ENCODE measurements at regions of chr20 and their contacts with region 1.

Region 1: GRCh38 chr20:63537525-63538203 is 488 bp upstream of the PTK6 start:
- DNase-seq: peak; percentile 90 to 96 (median 92)
- ATAC-seq: peak; percentile 83
- H3K4me3 ChIP-seq: no peak overlapping the region
- H3K27ac ChIP-seq: peak overlapping the region; percentile 62 to 89 (median 86)
- H3K4me1 ChIP-seq: peaks cover 35% of the 10 kb centered on the region
- H3K27me3 ChIP-seq: no peaks in the 10 kb centered on the region
- CTCF ChIP-seq: peak; percentile 84 to 99 (median 99)
- POLR2A ChIP-seq: peak; percentile 30 to 80 (median 69)

Region 2: GRCh38 chr20:63602321-63602720 is 64.7 kb after region 1 on chr20:
- intact Hi-C with region 1: no loop called
- DNase-seq: no peak
- ATAC-seq: no peak
- H3K4me3 ChIP-seq: no peak overlapping the region
- H3K27ac ChIP-seq: no peak overlapping the region
- H3K4me1 ChIP-seq: no peaks in the 10 kb centered on the region
- H3K27me3 ChIP-seq: no peaks in the 10 kb centered on the region
- CTCF ChIP-seq: no peak
- POLR2A ChIP-seq: no peak

Region 3: DNA sequence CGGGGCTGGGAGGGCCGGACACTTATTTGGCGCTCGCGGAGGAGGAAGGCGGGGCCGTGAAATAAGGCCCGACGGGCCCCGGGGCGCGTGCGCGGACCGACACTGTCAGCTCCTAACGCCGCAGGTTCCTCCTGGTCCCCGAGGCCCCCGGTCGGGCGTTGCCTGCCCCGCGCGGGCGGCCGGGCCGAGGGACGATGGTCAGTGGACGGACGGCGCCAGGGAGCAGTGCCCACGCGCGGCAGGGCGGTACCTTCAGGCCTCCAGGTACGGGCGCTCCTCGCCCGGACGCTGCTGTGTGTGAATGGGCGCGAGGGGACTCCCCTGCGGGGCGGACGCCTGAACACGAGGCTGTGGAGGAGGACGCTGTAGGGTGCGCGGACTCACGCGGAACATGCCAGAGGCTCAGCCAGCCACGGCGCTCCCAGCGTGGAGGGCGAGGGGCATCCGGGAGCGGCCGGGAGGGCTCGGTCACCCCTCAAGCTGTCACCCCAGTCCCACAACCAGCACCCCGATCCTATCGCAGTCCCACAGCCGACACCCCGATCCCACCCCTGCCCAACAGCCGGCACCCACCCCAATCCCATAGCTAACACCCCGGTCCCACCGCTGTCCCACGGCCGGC is 89.6 kb after region 1 on chr20:
- intact Hi-C with region 1: no loop called
- DNase-seq: peak; percentile 95 to 96 (median 96)
- ATAC-seq: peak; percentile 90
- H3K4me3 ChIP-seq: peak overlapping the region; percentile 78 to 97
- H3K27ac ChIP-seq: peak overlapping the region; percentile 81 to 95 (median 94)
- H3K4me1 ChIP-seq: peaks cover 27% of the 10 kb centered on the region
- H3K27me3 ChIP-seq: no peaks in the 10 kb centered on the region
- CTCF ChIP-seq: no peak
- POLR2A ChIP-seq: peak; percentile 51 to 78 (median 73)

Region 4: GRCh38 chr20:63698739-63699465 is 161.2 kb after region 1 on chr20:
- intact Hi-C with region 1: no loop called
- DNase-seq: peak; percentile 7 to 59 (median 36)
- ATAC-seq: peak; percentile 41
- H3K4me3 ChIP-seq: no peak overlapping the region
- H3K27ac ChIP-seq: peak overlapping the region in 2 of 4 donors; percentile 54 to 57
- H3K4me1 ChIP-seq: peaks cover 37% of the 10 kb centered on the region
- H3K27me3 ChIP-seq: no peaks in the 10 kb centered on the region
- CTCF ChIP-seq: no peak
- POLR2A ChIP-seq: no peak

Region 5: DNA sequence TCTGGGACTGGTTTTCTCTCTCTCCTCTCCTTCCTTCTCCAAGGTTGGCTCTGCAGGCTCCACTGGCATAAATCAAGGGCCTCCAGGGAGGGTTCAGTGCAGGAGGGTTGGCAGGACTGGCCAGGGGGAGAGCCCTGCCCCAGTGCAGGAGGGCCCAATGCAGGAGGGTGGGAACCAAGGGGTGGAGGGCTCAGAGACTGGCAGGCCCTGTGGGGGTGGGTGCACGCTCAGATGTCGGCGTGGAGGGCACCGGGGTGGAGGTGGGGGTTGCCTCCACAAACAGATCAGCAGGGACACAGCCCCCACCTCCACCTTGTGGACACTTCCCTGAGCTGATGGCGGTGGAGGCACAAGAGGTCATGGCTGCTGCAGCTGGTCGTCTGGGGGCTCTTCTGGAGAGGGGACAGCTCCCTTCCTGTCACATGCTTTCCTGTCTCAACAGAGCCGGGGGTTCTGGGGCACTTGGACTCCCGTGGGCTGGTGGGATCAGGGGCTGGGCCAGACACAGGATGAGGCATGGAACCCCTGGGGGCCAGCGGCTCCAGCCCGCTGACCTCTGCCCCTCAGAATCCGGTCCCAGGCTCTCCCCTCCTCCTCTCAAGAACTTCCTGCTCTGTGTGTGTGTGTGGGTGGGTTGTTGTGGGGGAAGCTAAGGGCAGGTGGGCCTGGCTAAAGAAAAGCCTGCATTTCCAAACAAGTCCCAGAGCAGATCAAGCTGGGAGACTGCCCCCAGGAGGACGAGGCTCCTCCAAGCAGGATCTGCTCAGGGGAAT is 320.9 kb after region 1 on chr20:
- intact Hi-C with region 1: loop called (anchors 10 kb)
- DNase-seq: no peak
- ATAC-seq: peak; percentile 10
- H3K4me3 ChIP-seq: no peak overlapping the region
- H3K27ac ChIP-seq: peak overlapping the region in 2 of 4 donors; percentile 23 to 36
- H3K4me1 ChIP-seq: peaks cover 31% of the 10 kb centered on the region
- H3K27me3 ChIP-seq: peaks cover 0 to 27% of the 10 kb centered on the region in 2 donors
- CTCF ChIP-seq: no peak
- POLR2A ChIP-seq: peak in 1 of 3 donors; percentile 9

Region 6: GRCh38 chr20:63969838-63970713 is 432.4 kb after region 1 on chr20 and contains the start of gene ZNF512B:
- intact Hi-C with region 1: loop called (anchors 10 kb)
- DNase-seq: peak; percentile 77 to 81 (median 78)
- ATAC-seq: peak; percentile 72
- H3K4me3 ChIP-seq: peak within 1 kb of the TSS; percentile 40 to 45
- H3K27ac ChIP-seq: peak within 1 kb of the TSS in 3 of 4 donors; percentile 56 to 75 (median 68)
- H3K4me1 ChIP-seq: peaks cover 30% of the 10 kb centered on the region
- H3K27me3 ChIP-seq: no peaks in the 10 kb centered on the region
- CTCF ChIP-seq: no peak
- POLR2A ChIP-seq: no peak
- total RNA-seq, gene ZNF512B: 8.0 to 12.5 TPM

Measured in body of pancreas (tissue), 4 donors.